ENCODE measurements at regions of chr3 and their contacts with region 1.

Region 1: DNA sequence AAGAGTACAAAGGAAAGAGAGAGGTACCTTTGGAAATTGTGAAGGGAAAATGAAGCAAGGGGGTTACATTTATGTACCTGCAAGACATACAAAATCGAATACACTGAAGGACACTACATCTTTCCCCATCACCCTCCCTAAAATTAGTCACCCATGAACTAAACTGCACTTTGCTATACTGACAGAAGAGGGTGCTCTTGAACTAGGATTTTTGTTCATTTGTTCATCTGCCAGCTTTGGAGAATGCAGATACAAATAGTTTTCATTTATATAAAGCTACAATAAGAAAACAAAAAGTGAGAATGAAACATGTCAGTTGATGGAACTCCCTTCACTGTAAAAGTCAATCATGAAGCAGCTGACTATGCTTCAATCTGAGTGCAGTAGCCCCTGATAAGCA is 55.7 kb downstream of the PCCB start:
- DNase-seq: peak; percentile 33
- H3K4me3 Mint-ChIP-seq: no peak overlapping the region
- H3K27ac Mint-ChIP-seq: no peak overlapping the region
- H3K4me1 Mint-ChIP-seq: no peaks in the 10 kb centered on the region
- H3K27me3 Mint-ChIP-seq: no peaks in the 10 kb centered on the region
- CTCF ChIP-seq: peak; percentile 65

Region 2: GRCh38 chr3:136276049-136276755 is 29.7 kb before region 1 on chr3:
- CTCF ChIA-PET with region 1: interaction called, 10 read pairs
- intact Hi-C with region 1: no loop called
- DNase-seq: no peak
- H3K4me3 Mint-ChIP-seq: no peak overlapping the region
- H3K27ac Mint-ChIP-seq: no peak overlapping the region
- H3K4me1 Mint-ChIP-seq: no peaks in the 10 kb centered on the region
- H3K27me3 Mint-ChIP-seq: no peaks in the 10 kb centered on the region
- CTCF ChIP-seq: no peak

Region 3: GRCh38 chr3:136390574-136390973 is 84.7 kb after region 1 on chr3:
- CTCF ChIA-PET with region 1: interaction called, 4 read pairs
- intact Hi-C with region 1: loop called (anchors 5 kb)
- DNase-seq: no peak
- H3K4me3 Mint-ChIP-seq: no peak overlapping the region
- H3K27ac Mint-ChIP-seq: no peak overlapping the region
- H3K4me1 Mint-ChIP-seq: no peaks in the 10 kb centered on the region
- H3K27me3 Mint-ChIP-seq: no peaks in the 10 kb centered on the region
- CTCF ChIP-seq: no peak